A673 (cell line): ENCODE measurements at regions of chr18 and their contacts with region 1.

Region 1: GRCh38 chr18:36848609-36849008 is 19.7 kb downstream of the KIAA1328 start:
- DNase-seq: no peak
- H3K4me3 ChIP-seq: no peak overlapping the region
- H3K27ac ChIP-seq: no peak overlapping the region
- H3K4me1 ChIP-seq: peaks cover 6% of the 10 kb centered on the region
- H3K27me3 ChIP-seq: no peaks in the 10 kb centered on the region
- CTCF ChIP-seq: no peak

Region 2: GRCh38 chr18:36427836-36428707 is 420.5 kb before region 1 on chr18:
- CTCF ChIA-PET with region 1: no interaction called
- POLR2A ChIA-PET with region 1: no interaction called
- intact Hi-C with region 1: no loop called
- DNase-seq: no peak
- H3K4me3 ChIP-seq: no peak overlapping the region
- H3K27ac ChIP-seq: no peak overlapping the region
- H3K4me1 ChIP-seq: no peaks in the 10 kb centered on the region
- H3K27me3 ChIP-seq: peaks cover 26% of the 10 kb centered on the region
- CTCF ChIP-seq: no peak

Region 3: GRCh38 chr18:36828630-36829361 is 19.8 kb before region 1 on chr18 and contains the starts of genes KIAA1328 and TPGS2:
- CTCF ChIA-PET with region 1: interaction called, 28 read pairs
- POLR2A ChIA-PET with region 1: no interaction called
- intact Hi-C with region 1: no loop called
- DNase-seq: peak; percentile 91
- H3K4me3 ChIP-seq: peak within 1 kb of the TSS; percentile 99
- H3K27ac ChIP-seq: peak within 1 kb of the TSS; percentile 79
- H3K4me1 ChIP-seq: peaks cover 12% of the 10 kb centered on the region
- H3K27me3 ChIP-seq: no peaks in the 10 kb centered on the region
- CTCF ChIP-seq: peak; percentile 54
- total RNA-seq, gene KIAA1328: 6.5 and 8.3 TPM in 2 replicates
- total RNA-seq, gene TPGS2: 102 and 106 TPM in 2 replicates

Region 4: DNA sequence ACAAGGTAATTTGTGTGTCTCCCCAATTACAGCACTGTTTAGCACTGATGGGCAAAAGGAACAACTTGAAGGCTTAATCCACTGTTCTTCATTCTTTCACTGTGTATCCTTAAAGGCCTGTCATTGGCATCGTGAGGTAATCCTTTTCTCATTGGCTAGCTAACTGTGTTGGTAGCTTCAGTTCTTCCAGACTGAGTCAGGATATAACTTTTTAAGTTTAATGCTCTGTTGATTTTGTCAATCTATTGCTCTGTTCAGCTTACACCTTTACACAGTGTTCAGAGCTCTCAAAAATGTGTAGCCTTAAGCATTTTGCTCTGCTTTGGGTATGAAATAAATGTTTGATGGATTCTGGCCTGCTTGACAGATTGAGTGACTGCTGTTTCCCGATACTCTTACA is 128.5 kb after region 1 on chr18:
- CTCF ChIA-PET with region 1: no interaction called
- POLR2A ChIA-PET with region 1: no interaction called
- intact Hi-C with region 1: no loop called
- DNase-seq: no peak
- H3K4me3 ChIP-seq: no peak overlapping the region
- H3K27ac ChIP-seq: no peak overlapping the region
- H3K4me1 ChIP-seq: no peaks in the 10 kb centered on the region
- H3K27me3 ChIP-seq: no peaks in the 10 kb centered on the region
- CTCF ChIP-seq: no peak